ENCODE measurements at regions of chr5 and their contacts with region 1.

Region 1: GRCh38 chr5:6377905-6378765 is at the start of gene MED10:
- DNase-seq: peak; percentile 88 to 96 (median 92)
- ATAC-seq: peak; percentile 95 to 96
- H3K4me3 Mint-ChIP-seq: peak within 1 kb of the TSS; percentile 97 to 100 (median 99)
- H3K27ac Mint-ChIP-seq: peak within 1 kb of the TSS; percentile 95 to 99 (median 98)
- H3K4me1 Mint-ChIP-seq: peaks cover 18 to 61% (median 55%) of the 10 kb centered on the region in 4 donors
- H3K27me3 Mint-ChIP-seq: peaks cover 0 to 2% (median 0%) of the 10 kb centered on the region in 5 donors
- polyA plus RNA-seq, gene MED10: 101 to 108 (median 105) TPM

Region 2: GRCh38 chr5:6359555-6360322 is 18.4 kb before region 1 on chr5:
- POLR2A ChIA-PET with region 1: interaction called, 16 read pairs
- DNase-seq: peak in 5 of 10 donors; percentile 18 to 54 (median 30)
- ATAC-seq: peak; percentile 71 to 93
- H3K4me3 Mint-ChIP-seq: peak overlapping the region; percentile 55 to 90 (median 78)
- H3K27ac Mint-ChIP-seq: peak overlapping the region; percentile 74 to 97 (median 94)
- H3K4me1 Mint-ChIP-seq: peaks cover 6 to 28% (median 18%) of the 10 kb centered on the region in 4 donors
- H3K27me3 Mint-ChIP-seq: no peaks in the 10 kb centered on the region

Measured in naive thymus-derived CD8-positive, alpha-beta T cell (primary cell).